AG04449 (cell line): ENCODE measurements at regions of chr19 and their contacts with region 1.

Region 1: DNA sequence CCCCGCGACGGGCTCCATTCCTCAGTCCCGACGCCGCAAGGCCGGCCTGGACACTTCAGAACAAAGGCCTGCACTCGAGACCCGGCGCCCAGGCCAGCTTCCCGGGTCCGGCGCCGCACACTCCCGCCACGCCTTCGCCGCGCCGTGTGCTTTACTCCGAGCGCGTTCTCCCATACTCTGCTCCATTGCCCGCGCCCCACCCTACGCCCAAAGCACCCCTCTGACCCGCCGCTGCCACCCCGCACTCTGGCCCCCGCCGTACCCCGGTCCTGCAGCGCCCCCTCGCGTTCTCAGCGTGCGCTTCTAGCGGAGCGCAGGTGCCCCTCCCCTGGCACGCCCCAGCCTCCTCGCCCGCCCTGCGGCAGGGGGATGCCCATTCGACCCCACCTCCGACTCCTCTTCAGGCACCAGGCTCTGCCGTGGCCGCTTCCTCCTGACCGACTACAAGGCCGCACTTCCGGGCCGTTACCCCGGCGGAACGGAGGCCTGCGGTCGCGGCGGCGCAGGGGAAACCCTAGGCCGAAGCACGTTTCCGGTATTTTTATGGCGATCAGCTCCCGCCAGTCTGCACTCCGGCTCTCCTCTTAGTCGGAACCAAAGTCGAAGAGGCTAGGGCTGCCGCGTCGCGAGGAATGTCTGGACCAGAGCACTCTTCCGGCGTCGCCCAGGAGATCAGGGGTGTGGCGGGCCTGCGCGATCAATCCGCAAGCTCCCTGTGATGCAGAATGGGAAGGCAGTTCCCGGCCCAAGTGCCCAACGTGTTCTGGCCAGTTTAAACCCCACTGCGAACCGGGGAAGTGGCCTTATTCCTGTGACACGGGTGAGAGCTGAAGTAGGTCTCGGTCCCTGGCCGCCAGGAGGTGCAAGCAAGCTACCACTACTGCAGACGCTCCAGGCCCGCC is at the start of gene ZBTB45:
- DNase-seq: peak; percentile 83
- H3K4me3 ChIP-seq: peak within 1 kb of the TSS; percentile 89
- CTCF ChIP-seq: peak; percentile 90

Region 2: DNA sequence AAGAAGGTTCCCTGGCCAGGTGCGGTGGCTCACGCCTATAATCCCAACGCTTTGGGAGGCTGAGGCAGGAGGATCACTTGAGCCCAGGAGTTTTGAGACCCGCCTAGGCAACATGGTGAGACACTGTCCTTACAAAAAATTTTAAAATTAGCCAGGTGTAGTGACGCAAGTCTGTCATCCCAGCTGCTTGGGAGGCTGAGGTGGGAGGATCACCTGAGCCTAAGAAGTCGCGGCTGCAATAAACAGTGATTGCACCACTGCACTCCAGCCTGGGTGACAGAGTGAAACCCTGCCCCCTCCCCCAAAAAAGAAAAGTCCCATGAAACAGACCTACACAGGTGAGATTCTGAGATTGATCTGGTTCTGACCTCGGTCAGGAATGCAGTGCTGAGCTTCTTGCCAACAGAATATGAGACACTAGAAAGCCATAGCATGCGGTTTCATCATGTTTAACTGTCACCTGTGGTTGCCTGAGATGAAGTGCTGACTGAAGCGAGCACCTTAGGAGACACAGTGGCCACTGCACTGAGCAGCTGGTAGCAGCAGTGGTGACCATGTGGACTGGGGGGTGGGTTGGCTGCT is 164.3 kb before region 1 on chr19:
- CTCF ChIA-PET with region 1: no interaction called
- POLR2A ChIA-PET with region 1: no interaction called
- DNase-seq: no peak
- H3K4me3 ChIP-seq: no peak overlapping the region
- CTCF ChIP-seq: no peak

Region 3: GRCh38 chr19:58499021-58499927 is 20.3 kb before region 1 on chr19:
- CTCF ChIA-PET with region 1: interaction called, 43 read pairs
- POLR2A ChIA-PET with region 1: interaction called, 7 read pairs
- DNase-seq: peak; percentile 89
- H3K4me3 ChIP-seq: peak overlapping the region; percentile 70
- CTCF ChIP-seq: no peak

Region 4: DNA sequence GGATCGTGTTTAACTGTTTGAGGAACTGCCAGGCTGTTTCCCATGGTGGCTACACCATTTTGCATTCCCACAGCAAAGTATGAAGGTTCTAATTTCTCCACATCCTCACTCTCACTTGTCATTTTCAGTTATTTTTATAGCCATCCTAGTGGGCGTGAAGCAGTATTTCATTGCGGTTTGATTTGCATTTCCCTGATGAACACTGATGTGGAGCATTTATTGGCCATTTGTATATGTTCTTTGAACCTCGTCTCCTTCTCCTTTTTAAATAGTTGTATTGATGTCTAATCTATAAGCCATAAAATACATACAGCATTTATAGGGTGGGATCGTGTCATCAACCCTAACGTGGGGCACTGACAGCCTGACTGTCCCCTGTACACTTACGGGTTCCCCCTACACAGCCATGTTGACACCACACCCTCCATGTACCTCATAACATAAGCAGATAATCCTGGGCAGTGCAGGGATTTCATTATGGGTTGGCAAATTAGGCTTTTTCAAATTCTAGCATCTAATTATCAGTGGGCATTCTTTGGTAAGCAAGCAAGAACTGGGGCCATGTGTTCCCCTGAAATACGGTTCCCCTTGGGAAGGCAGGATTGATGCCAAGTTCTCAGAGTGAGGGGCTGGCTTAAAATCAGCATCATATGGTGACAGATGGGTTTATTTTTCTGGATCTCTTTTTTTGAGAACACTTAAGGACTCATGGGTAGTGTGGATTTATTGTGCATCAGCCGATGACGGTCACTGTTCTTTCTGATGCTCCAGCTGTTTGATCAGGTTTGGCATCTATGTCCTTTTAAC is 11.6 kb after region 1 on chr19:
- CTCF ChIA-PET with region 1: interaction called, 36 read pairs
- POLR2A ChIA-PET with region 1: interaction called, 5 read pairs
- DNase-seq: no peak
- H3K4me3 ChIP-seq: no peak overlapping the region
- CTCF ChIP-seq: no peak

Region 5: GRCh38 chr19:58543826-58544590 is 24.4 kb after region 1 on chr19 and contains the start of gene TRIM28:
- CTCF ChIA-PET with region 1: interaction called, 42 read pairs
- POLR2A ChIA-PET with region 1: interaction called, 37 read pairs
- DNase-seq: peak; percentile 95
- H3K4me3 ChIP-seq: peak within 1 kb of the TSS; percentile 84
- CTCF ChIP-seq: no peak

Region 6: GRCh38 chr19:58558623-58559274 is 39.1 kb after region 1 on chr19:
- CTCF ChIA-PET with region 1: interaction called, 37 read pairs
- POLR2A ChIA-PET with region 1: interaction called, 27 read pairs
- DNase-seq: peak; percentile 89
- H3K4me3 ChIP-seq: peak overlapping the region; percentile 97
- CTCF ChIP-seq: no peak

Region 7: DNA sequence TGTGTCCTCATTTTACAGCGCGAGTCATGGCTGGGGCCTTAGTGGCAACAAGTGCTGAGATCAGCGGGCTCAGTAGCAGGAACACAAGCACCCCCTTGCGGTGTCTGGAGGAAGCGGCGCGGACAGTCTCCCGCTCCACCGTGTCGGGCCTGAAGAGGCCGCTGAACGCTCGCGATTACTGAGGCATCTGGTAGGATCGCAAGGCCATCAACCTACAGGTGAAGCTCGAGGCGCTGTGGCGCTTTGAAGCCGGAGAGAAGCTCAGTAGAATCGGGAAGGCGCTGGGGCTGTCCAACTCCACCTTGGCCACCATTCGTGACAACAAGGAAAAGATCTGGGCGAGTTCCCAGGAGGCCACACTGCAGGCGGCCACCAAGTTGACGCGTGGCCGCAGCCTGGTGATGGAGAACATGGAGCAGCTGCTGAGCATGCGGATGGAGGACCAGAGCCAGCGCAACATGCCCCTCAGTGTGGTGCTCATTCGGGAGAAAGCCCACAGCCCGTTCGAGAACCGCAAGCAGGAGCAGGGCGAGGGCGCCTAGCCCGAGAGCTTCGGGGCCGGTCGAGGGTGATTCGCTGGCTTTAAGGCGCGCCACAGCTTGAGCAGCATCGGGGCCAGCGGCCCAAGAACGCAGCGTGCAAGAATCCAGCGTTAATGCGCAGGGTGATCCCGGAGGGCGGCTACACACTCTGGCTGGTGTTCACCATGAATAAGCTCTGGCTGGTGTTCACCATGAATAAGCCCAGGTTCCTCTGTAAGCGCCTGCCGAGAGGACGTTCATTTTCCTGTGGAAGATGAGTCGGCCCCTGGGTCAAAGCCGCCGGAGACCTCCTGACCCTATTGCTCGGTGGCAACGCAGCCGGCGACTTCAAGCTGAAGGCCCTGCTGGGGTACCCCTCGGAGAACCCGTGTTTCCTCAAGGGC is 61.9 kb after region 1 on chr19:
- CTCF ChIA-PET with region 1: interaction called, 109 read pairs
- POLR2A ChIA-PET with region 1: no interaction called
- DNase-seq: no peak
- H3K4me3 ChIP-seq: no peak overlapping the region
- CTCF ChIP-seq: peak; percentile 100